ENCODE measurements at regions of chr1 and their contacts with region 1.

Region 1: GRCh38 chr1:235697508-235697907 is 47.9 kb upstream of the GNG4 start:
- DNase-seq: no peak
- H3K4me3 ChIP-seq: no peak overlapping the region
- H3K4me3 Mint-ChIP-seq: no peak overlapping the region
- H3K27ac ChIP-seq: no peak overlapping the region
- H3K27ac Mint-ChIP-seq: peak overlapping the region in 5 of 7 donors; percentile 15 to 47 (median 23)
- H3K4me1 ChIP-seq: no peaks in the 10 kb centered on the region
- H3K4me1 Mint-ChIP-seq: no peaks in the 10 kb centered on the region
- H3K27me3 ChIP-seq: no peaks in the 10 kb centered on the region
- H3K27me3 Mint-ChIP-seq: peaks cover 0 to 3% (median 0%) of the 10 kb centered on the region in 3 donors
- CTCF ChIP-seq: no peak

Region 2: GRCh38 chr1:235657747-235658526 is 39.6 kb before region 1 on chr1:
- intact Hi-C with region 1: no loop called
- DNase-seq: no peak
- H3K4me3 ChIP-seq: no peak overlapping the region
- H3K4me3 Mint-ChIP-seq: no peak overlapping the region
- H3K27ac ChIP-seq: no peak overlapping the region
- H3K27ac Mint-ChIP-seq: no peak overlapping the region
- H3K4me1 ChIP-seq: no peaks in the 10 kb centered on the region
- H3K4me1 Mint-ChIP-seq: no peaks in the 10 kb centered on the region
- H3K27me3 ChIP-seq: peaks cover 14 to 22% of the 10 kb centered on the region in 2 donors
- H3K27me3 Mint-ChIP-seq: peaks cover 19 to 26% (median 24%) of the 10 kb centered on the region in 3 donors
- CTCF ChIP-seq: no peak

Region 3: GRCh38 chr1:235758931-235759330 is 61.4 kb after region 1 on chr1:
- intact Hi-C with region 1: loop called in 1 of 2 experiments (anchors 10 kb)
- DNase-seq: no peak
- H3K4me3 ChIP-seq: no peak overlapping the region
- H3K4me3 Mint-ChIP-seq: no peak overlapping the region
- H3K27ac ChIP-seq: peak overlapping the region in 1 of 2 donors; percentile 17
- H3K27ac Mint-ChIP-seq: peak overlapping the region in 3 of 7 donors; percentile 4 to 60 (median 45)
- H3K4me1 ChIP-seq: no peaks in the 10 kb centered on the region
- H3K4me1 Mint-ChIP-seq: no peaks in the 10 kb centered on the region
- H3K27me3 ChIP-seq: no peaks in the 10 kb centered on the region
- H3K27me3 Mint-ChIP-seq: peaks cover 0 to 2% (median 0%) of the 10 kb centered on the region in 3 donors
- CTCF ChIP-seq: no peak

Region 4: GRCh38 chr1:235946571-235946981 is 249.1 kb after region 1 on chr1:
- intact Hi-C with region 1: no loop called
- DNase-seq: no peak
- H3K4me3 ChIP-seq: peak overlapping the region in 1 of 3 experiments; percentile 60
- H3K4me3 Mint-ChIP-seq: peak overlapping the region; percentile 62 to 71
- H3K27ac ChIP-seq: peak overlapping the region; percentile 95 to 100
- H3K27ac Mint-ChIP-seq: peak overlapping the region; percentile 97 to 100 (median 99)
- H3K4me1 ChIP-seq: peaks cover 99 to 100% of the 10 kb centered on the region in 2 donors
- H3K4me1 Mint-ChIP-seq: peaks cover 96% of the 10 kb centered on the region
- H3K27me3 ChIP-seq: no peaks in the 10 kb centered on the region
- H3K27me3 Mint-ChIP-seq: peaks cover 0 to 2% (median 0%) of the 10 kb centered on the region in 3 donors
- CTCF ChIP-seq: peak; percentile 1

Region 5: GRCh38 chr1:236576004-236576403 is 878.5 kb after region 1 on chr1:
- intact Hi-C with region 1: loop called in 1 of 2 experiments (anchors 10 kb)
- DNase-seq: no peak
- H3K4me3 ChIP-seq: no peak overlapping the region
- H3K4me3 Mint-ChIP-seq: no peak overlapping the region
- H3K27ac ChIP-seq: no peak overlapping the region
- H3K27ac Mint-ChIP-seq: no peak overlapping the region
- H3K4me1 ChIP-seq: no peaks in the 10 kb centered on the region
- H3K4me1 Mint-ChIP-seq: no peaks in the 10 kb centered on the region
- H3K27me3 ChIP-seq: no peaks in the 10 kb centered on the region
- H3K27me3 Mint-ChIP-seq: no peaks in the 10 kb centered on the region
- CTCF ChIP-seq: no peak

Measured in CD14-positive monocyte (primary cell).